ENCODE measurements at regions of chr12 and their contacts with region 1.

Region 1: DNA sequence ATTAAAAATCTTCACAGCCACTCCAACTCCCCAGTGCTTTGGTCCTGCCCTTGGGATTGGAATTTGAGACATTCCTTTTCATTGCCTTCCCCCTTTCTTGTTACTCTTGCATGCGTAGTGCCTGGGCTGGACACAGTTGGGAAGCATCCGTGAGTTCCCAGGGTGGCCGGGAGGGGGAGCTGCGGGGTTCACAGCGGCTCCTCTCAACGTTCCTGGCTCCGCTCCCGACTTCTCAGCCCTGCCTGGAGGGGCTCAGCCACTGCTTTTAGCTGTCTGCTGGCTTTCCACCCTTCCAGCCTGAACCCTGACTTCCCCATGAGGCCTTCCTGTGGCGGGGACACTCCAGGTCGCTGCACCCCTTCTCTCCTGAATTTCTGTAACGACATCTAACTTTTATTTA is 3.2 kb downstream of the TEX52 start:
- H3K4me3 Mint-ChIP-seq: no peak overlapping the region
- H3K27ac Mint-ChIP-seq: no peak overlapping the region
- H3K4me1 Mint-ChIP-seq: no peaks in the 10 kb centered on the region
- H3K27me3 Mint-ChIP-seq: no peaks in the 10 kb centered on the region

Region 2: DNA sequence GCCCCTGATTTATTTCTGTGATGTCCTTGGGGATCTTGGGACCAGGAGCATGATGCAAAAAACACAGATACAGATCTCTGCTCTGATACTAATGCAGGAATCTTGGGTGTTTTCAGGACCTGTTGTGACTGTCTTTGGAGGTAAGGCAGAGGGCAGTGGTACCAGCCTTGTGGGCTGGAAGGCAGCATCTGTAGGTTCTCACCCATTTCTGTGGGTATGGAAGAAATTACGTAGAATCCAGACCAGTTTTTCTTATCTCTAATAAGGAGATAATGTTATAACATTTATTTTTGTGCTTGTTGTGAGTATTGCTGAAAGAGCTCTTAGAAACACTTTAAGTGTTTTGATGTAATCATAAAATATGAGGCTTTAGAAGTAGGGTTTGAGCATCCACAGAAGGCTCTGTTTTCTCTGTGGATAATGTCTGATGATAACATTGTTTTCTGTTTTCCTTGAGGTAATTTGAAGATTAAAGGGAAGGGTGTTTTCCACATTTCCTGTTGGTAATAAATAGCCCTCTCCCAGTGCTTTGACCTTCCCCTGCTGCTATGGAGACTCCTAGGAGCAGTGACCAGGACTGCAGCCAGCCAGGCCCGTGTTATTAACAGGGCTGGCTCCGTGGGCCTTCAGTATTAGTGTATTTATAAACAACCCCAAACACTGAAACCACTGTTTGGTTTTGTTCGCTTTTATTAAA is 840.0 kb before region 1 on chr12:
- intact Hi-C with region 1: no loop called
- H3K4me3 Mint-ChIP-seq: no peak overlapping the region
- H3K27ac Mint-ChIP-seq: no peak overlapping the region
- H3K4me1 Mint-ChIP-seq: no peaks in the 10 kb centered on the region
- H3K27me3 Mint-ChIP-seq: peaks cover 10% of the 10 kb centered on the region

Region 3: DNA sequence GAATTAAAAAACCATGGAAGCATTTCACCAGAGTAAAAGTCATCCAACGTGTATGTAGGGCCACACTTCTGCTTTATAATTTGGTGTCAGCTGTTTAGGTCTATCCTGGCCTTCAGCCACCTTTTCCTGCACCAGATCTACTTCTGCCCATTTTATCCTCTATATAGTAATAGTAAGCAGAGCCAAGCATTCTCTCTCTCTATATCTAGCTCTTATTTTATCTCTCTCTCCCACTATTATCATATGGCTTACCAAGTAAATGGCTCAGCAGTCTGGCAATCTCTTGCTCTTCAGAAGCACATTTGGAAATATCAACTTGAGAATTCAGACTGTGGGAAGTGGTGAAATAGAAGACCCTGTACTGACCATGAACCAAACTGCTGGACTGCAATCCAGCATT is 142.9 kb before region 1 on chr12:
- intact Hi-C with region 1: no loop called
- H3K4me3 Mint-ChIP-seq: no peak overlapping the region
- H3K27ac Mint-ChIP-seq: no peak overlapping the region
- H3K4me1 Mint-ChIP-seq: no peaks in the 10 kb centered on the region
- H3K27me3 Mint-ChIP-seq: peaks cover 3% of the 10 kb centered on the region

Region 4: DNA sequence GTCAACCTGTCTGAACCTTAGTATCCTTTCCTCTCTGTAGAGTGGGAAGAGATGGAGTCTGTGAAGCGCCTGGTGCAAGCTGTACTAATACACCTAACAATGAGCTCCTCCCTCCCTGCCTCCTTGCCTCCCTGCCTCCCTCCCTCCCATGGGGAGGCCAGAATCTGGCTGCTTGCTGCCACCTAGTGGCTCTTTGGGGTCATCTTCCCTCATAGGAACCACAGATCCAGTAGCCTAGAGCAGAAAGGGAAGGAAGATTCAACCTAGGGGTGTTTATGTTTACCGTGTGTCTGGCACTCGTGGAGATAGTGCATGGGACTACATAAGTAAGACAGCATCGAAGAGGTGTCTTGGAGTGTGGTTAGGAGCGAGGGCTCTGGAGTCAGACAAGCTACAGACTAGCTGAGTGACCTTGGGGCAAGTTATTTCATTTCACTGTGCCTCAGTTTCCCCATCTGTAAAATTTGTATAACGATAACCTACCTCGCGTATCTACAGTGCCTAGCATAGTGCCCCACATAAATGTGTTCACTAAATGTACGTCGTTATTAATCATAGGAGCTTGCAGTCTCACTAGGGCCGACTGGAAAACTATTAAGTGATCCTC is 188.0 kb after region 1 on chr12:
- intact Hi-C with region 1: loop called (anchors 1 kb)
- H3K4me3 Mint-ChIP-seq: no peak overlapping the region
- H3K27ac Mint-ChIP-seq: no peak overlapping the region
- H3K4me1 Mint-ChIP-seq: no peaks in the 10 kb centered on the region
- H3K27me3 Mint-ChIP-seq: peaks cover 13% of the 10 kb centered on the region

Measured in dendritic cell treated with granulocyte-macrophage colony-stimulating factor and Interleukin-4, amounts not matched to agents 40 ng/mL and 50 ng/mL, for 4 days (primary cell).